ENCODE measurements at regions of chr3 and their contacts with region 1.

Region 1: DNA sequence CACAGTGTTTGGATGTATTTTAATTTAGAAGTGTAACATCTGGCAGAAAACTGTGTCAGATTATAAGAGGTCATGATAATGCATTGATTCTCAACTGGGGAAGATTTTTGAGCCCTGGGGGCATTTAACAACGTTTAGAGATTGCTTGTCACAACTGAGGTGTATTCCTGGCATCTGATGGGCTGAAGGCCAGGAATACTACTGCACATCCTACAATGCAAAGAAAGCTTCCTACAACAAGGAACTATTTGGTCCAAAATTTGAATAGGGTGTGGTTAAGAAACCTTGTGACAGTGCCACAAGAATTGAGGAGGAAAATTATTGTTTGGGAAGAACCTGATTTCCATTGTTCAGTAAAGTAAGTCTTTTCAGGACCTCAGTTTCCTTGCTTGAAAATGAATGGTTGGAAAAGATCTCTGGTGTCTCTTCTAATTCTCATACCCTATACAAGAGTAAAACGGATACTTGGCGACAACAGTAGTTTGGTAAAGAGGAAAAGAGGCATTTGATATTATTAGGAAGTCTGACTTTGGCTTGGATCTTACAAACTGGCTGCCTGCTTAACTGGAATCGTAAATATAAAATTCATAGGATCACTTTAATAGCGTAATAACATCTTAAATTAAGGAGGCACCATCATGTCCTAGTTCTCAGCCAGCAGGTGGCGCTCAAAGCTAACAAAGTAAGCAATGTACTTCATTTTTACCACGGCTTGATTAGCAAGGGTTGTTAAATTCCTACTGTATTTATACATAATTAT is 4.3 kb downstream of the DAZL start:
- DNase-seq: peak; percentile 90
- H3K4me3 Mint-ChIP-seq: no peak overlapping the region
- H3K27ac Mint-ChIP-seq: no peak overlapping the region
- H3K4me1 Mint-ChIP-seq: peaks cover 19% of the 10 kb centered on the region
- H3K27me3 Mint-ChIP-seq: no peaks in the 10 kb centered on the region

Region 2: GRCh38 chr3:16264708-16265454 is 336.1 kb before region 1 on chr3 and contains the starts of genes DPH3 and OXNAD1:
- CTCF ChIA-PET with region 1: interaction called, 3 read pairs
- intact Hi-C with region 1: loop called (anchors 2 kb)
- DNase-seq: peak; percentile 100
- H3K4me3 Mint-ChIP-seq: peak within 1 kb of the TSS; percentile 96
- H3K27ac Mint-ChIP-seq: peak within 1 kb of the TSS; percentile 94
- H3K4me1 Mint-ChIP-seq: peaks cover 31% of the 10 kb centered on the region
- H3K27me3 Mint-ChIP-seq: no peaks in the 10 kb centered on the region
- total RNA-seq, gene DPH3: 16.1 to 17.0 TPM
- total RNA-seq, gene OXNAD1: 32.4 to 34.2 TPM

Region 3: DNA sequence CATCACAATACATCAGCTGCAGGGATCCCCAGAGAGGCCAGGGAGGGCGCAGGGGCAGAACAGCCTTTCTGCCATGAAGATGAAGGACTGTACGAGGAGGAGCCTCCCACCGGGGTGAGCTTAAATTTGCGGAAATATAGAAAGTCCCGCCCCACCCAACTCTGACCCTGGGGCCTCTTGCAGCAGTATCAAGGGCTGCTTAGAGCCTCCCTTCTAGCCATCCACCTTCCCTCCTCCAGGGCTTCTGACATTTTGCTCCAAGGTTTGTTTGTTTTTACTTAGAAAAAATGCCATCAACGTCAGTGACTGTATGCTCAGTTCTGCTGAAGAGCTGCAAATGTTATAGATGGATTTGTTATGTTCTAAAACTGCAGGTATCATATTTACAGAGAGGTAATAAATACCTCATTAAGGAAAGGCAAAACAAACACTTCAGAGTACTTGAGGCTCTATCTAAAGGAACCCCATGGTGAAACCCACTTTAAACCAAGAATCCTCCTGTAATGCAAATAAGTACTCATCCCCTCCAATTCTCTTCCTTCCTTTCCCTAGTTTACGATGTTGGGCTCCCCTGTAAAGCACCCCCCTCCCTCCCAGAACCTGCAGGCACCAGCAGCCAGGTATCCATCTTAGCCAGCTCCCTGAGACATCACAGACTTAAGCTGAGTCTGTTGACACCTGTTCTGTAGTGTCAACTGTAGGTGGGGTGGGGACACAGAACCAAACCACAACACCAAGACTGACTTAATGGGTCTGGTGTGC is 118.0 kb before region 1 on chr3:
- CTCF ChIA-PET with region 1: no interaction called
- intact Hi-C with region 1: no loop called
- DNase-seq: peak; percentile 62
- H3K4me3 Mint-ChIP-seq: peak overlapping the region; percentile 3
- H3K27ac Mint-ChIP-seq: peak overlapping the region; percentile 74
- H3K4me1 Mint-ChIP-seq: peaks cover 82% of the 10 kb centered on the region
- H3K27me3 Mint-ChIP-seq: no peaks in the 10 kb centered on the region

Region 4: GRCh38 chr3:16828815-16829214 is 227.9 kb after region 1 on chr3:
- CTCF ChIA-PET with region 1: no interaction called
- intact Hi-C with region 1: loop called (anchors 2 kb)
- DNase-seq: peak; percentile 75
- H3K4me3 Mint-ChIP-seq: no peak overlapping the region
- H3K27ac Mint-ChIP-seq: no peak overlapping the region
- H3K4me1 Mint-ChIP-seq: peaks cover 18% of the 10 kb centered on the region
- H3K27me3 Mint-ChIP-seq: no peaks in the 10 kb centered on the region

Region 5: DNA sequence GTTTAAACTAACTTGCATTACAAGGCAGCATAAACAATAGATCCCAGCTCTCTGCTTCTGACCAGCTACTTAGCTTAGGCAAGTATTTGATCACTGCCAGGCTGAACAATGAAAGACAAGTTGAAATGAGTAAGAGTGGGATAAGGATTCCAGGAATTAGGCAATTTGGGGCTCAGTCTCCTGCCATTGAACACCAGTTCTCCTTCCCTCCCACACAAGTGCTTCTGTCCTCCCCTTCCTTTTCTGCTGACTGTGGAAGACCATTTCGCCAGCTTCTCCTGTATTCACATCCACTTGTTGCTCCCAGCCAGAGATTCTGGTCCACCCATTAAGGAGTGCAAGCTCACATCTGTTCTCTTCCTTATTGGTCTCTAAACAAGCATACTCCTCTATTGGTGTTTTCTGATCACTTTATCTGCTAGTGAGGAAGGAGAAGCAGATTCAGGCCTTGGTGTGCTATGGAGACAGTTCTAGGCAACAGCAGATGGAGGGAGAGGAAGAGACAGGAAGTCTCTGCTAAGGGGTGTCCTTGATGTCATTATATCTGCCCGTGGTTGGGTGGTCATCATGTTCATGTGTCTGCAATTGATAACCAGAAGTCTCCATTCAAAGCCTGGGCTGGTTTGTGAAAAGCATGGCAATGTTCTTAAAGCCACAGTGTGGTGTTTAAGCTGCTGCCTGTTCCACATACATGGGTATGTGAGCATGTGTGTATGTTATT is 405.3 kb after region 1 on chr3:
- CTCF ChIA-PET with region 1: no interaction called
- intact Hi-C with region 1: no loop called
- DNase-seq: no peak
- H3K4me3 Mint-ChIP-seq: no peak overlapping the region
- H3K27ac Mint-ChIP-seq: no peak overlapping the region
- H3K4me1 Mint-ChIP-seq: peaks cover 62% of the 10 kb centered on the region
- H3K27me3 Mint-ChIP-seq: no peaks in the 10 kb centered on the region

Region 6: GRCh38 chr3:17023006-17023664 is 422.2 kb after region 1 on chr3:
- CTCF ChIA-PET with region 1: no interaction called
- intact Hi-C with region 1: loop called (anchors 1 kb)
- DNase-seq: peak; percentile 82
- H3K4me3 Mint-ChIP-seq: peak overlapping the region; percentile 60
- H3K27ac Mint-ChIP-seq: peak overlapping the region; percentile 90
- H3K4me1 Mint-ChIP-seq: peaks cover 73% of the 10 kb centered on the region
- H3K27me3 Mint-ChIP-seq: no peaks in the 10 kb centered on the region

Region 7: DNA sequence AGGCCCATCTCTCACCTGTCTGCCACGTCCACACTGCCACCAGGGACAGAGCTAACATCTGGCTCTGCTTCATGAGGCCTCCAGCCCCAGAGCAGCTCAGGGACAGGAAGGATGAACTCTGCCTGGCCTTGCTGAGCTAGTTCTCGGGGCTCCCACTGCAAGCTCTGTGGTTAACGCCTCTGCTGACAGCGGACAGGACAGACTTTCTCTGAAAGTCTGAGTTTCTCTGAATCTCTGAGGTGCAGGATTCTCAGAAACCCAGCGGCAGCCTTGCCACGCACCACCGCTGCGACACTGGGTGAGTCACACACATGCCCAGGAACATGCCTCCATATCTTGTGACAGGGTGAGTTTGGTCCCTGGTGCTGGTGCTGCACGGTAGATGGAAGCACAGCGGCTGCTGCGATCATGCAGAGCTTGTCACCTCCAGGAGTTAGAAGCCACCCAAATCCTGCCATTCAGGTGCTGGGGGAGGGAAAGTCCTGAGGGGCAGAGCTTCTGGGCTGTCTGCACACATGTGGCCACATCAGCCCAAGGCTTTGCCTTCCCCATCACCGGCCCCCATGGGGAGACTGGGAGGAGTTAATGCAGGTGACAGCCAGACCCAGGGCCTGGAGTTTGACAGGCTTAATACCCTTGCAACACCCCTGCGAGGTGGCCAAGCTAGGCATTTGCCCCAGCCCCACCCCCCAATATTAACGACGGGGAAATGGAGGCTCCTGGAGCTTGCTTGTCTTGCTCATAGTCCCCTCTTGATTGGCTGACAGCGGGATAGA is 550.8 kb after region 1 on chr3:
- CTCF ChIA-PET with region 1: no interaction called
- intact Hi-C with region 1: loop called (anchors 1 kb)
- DNase-seq: peak; percentile 95
- H3K4me3 Mint-ChIP-seq: peak overlapping the region; percentile 28
- H3K27ac Mint-ChIP-seq: peak overlapping the region; percentile 85
- H3K4me1 Mint-ChIP-seq: peaks cover 25% of the 10 kb centered on the region
- H3K27me3 Mint-ChIP-seq: no peaks in the 10 kb centered on the region

Region 8: DNA sequence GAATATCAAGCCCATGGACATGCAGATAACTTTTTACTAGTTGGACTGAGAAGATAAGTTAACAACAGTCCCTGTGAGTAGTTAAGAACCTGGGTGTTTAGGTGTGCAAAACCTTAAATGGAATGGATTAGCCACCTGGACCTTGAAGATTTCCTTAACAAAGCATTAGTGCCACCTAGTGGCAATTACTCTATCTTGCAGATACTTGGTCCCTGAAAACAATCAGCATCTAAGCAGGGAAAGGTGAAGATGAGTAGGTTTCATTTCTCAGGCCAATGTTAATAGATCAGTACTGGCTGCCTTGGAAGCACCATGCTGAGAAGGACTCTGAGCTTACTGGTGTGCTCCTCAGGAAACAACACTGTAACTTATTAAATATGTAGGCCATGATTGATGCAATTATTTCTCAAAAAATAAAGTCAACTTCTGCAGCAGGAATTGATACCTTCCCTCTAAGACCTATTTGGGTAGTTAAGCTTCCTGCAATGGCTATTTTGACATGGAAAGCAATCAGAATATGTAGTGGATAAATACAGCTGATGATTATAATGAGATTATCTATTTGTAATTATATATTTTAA is 812.1 kb after region 1 on chr3:
- CTCF ChIA-PET with region 1: interaction called, 5 read pairs
- intact Hi-C with region 1: loop called (anchors 1 kb)
- DNase-seq: peak; percentile 10
- H3K4me3 Mint-ChIP-seq: no peak overlapping the region
- H3K27ac Mint-ChIP-seq: no peak overlapping the region
- H3K4me1 Mint-ChIP-seq: no peaks in the 10 kb centered on the region
- H3K27me3 Mint-ChIP-seq: no peaks in the 10 kb centered on the region